CD4-positive, alpha-beta memory T cell (primary cell): ENCODE measurements at regions of chr9 and their contacts with region 1.

Region 1: DNA sequence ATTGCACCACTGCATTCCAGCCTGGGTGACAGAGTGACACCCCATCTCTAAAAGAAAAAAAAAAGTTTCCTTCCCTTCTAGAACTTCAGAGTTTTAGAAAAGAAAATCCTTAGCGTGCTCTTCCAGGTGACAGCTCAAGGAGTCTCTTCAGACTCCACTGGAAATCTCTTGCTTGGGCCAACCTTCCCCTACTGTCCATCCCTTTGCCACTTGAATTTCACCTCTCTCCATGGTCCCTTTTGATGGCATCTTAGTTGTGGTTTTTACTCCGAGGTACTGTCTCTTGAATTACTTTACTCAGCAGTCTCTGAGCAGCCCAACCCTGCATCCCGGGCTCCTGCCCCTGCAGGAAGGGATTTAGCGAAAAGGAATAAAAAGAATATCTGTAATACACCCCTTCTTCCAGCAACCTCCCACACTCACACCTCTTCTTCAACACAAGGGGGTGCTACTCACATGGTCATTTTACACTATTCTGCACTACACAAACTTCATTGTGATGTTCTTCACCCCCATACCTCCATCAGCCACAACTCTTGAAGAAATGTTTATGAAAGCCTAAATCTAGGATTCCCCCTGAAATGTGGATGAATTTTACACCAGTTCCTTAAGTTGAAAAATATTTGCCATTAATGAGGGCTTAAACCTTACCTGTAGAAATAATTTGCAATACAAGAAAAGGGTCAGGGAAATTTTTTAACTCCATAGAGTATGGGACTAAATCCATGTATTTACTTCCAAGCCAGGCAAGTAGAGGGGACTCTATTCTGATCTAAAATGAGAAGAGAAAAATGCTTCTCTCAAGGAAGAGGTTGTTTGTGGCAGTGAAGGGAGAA is 25.9 kb downstream of the TPD52L3 start:
- DNase-seq: peak in 4 of 5 donors; percentile 51 to 66 (median 59)
- H3K4me3 ChIP-seq: no peak overlapping the region
- H3K4me3 Mint-ChIP-seq: no peak overlapping the region
- H3K27ac ChIP-seq: no peak overlapping the region
- H3K27ac Mint-ChIP-seq: no peak overlapping the region
- H3K4me1 ChIP-seq: no peaks in the 10 kb centered on the region
- H3K4me1 Mint-ChIP-seq: no peaks in the 10 kb centered on the region
- H3K27me3 ChIP-seq: no peaks in the 10 kb centered on the region
- H3K27me3 Mint-ChIP-seq: peaks cover 1 to 5% of the 10 kb centered on the region in 2 donors

Region 2: GRCh38 chr9:5712651-5713390 is 641.2 kb before region 1 on chr9:
- CTCF ChIA-PET with region 1: no interaction called
- POLR2A ChIA-PET with region 1: no interaction called
- intact Hi-C with region 1: no loop called
- DNase-seq: no peak
- H3K4me3 ChIP-seq: no peak overlapping the region
- H3K4me3 Mint-ChIP-seq: no peak overlapping the region
- H3K27ac ChIP-seq: no peak overlapping the region
- H3K27ac Mint-ChIP-seq: peak overlapping the region in 1 of 7 donors; percentile 14
- H3K4me1 ChIP-seq: no peaks in the 10 kb centered on the region
- H3K4me1 Mint-ChIP-seq: peaks cover 0 to 3% (median 0%) of the 10 kb centered on the region in 4 donors
- H3K27me3 ChIP-seq: no peaks in the 10 kb centered on the region
- H3K27me3 Mint-ChIP-seq: no peaks in the 10 kb centered on the region

Region 3: GRCh38 chr9:6367128-6367890 is 13.2 kb after region 1 on chr9:
- CTCF ChIA-PET with region 1: interaction called, 15 read pairs
- POLR2A ChIA-PET with region 1: no interaction called
- intact Hi-C with region 1: no loop called
- DNase-seq: no peak
- H3K4me3 ChIP-seq: no peak overlapping the region
- H3K4me3 Mint-ChIP-seq: no peak overlapping the region
- H3K27ac ChIP-seq: no peak overlapping the region
- H3K27ac Mint-ChIP-seq: no peak overlapping the region
- H3K4me1 ChIP-seq: no peaks in the 10 kb centered on the region
- H3K4me1 Mint-ChIP-seq: no peaks in the 10 kb centered on the region
- H3K27me3 ChIP-seq: no peaks in the 10 kb centered on the region
- H3K27me3 Mint-ChIP-seq: peaks cover 0 to 3% of the 10 kb centered on the region in 2 donors

Region 4: GRCh38 chr9:6490863-6491262 is 136.8 kb after region 1 on chr9:
- CTCF ChIA-PET with region 1: interaction called, 6 read pairs
- POLR2A ChIA-PET with region 1: no interaction called
- intact Hi-C with region 1: loop called (anchors 5 kb)
- DNase-seq: no peak
- H3K4me3 ChIP-seq: no peak overlapping the region
- H3K4me3 Mint-ChIP-seq: no peak overlapping the region
- H3K27ac ChIP-seq: no peak overlapping the region
- H3K27ac Mint-ChIP-seq: no peak overlapping the region
- H3K4me1 ChIP-seq: no peaks in the 10 kb centered on the region
- H3K4me1 Mint-ChIP-seq: peaks cover 0 to 20% (median 11%) of the 10 kb centered on the region in 4 donors
- H3K27me3 ChIP-seq: no peaks in the 10 kb centered on the region
- H3K27me3 Mint-ChIP-seq: no peaks in the 10 kb centered on the region

Region 5: DNA sequence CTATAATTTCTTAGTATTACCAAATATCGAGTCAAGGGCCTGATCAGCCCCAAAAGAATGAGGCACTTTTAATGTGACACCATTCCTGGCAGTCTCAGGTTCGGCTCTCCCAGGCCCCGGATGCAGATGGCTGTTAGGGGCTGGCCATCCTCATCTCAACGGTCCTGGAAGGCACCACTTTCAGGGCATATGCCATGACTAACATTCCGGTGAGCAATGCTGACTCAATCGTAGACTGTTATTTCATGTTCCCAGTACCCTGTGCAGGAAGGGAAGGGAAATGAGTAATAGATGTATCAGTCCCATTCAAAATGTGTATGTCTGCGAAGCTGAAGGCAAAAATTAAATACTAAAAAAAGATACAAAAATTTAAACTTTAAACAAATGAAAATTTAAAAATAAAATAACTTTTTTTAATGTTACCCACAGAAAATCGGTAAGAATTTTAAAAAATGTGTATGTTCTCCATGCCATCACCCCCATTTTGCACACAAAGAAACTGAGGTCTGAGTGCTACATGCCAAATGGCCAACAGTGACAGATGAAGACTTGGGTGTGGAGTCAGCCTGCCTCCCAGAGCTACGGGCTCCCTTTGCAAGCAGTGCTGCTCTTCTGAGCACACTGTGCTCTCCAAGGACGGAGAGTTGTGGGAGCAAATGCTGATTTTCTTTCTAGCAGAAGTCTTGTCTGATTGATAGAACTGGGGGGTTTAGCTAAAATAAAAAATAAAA is 212.5 kb after region 1 on chr9:
- CTCF ChIA-PET with region 1: interaction called, 236 read pairs
- POLR2A ChIA-PET with region 1: interaction called, 4 read pairs
- intact Hi-C with region 1: no loop called
- DNase-seq: no peak
- H3K4me3 ChIP-seq: no peak overlapping the region
- H3K4me3 Mint-ChIP-seq: no peak overlapping the region
- H3K27ac ChIP-seq: no peak overlapping the region
- H3K27ac Mint-ChIP-seq: peak overlapping the region in 2 of 7 donors; percentile 2 to 42
- H3K4me1 ChIP-seq: no peaks in the 10 kb centered on the region
- H3K4me1 Mint-ChIP-seq: peaks cover 0 to 1% (median 0%) of the 10 kb centered on the region in 4 donors
- H3K27me3 ChIP-seq: no peaks in the 10 kb centered on the region
- H3K27me3 Mint-ChIP-seq: peaks cover 0 to 1% of the 10 kb centered on the region in 2 donors

Region 6: GRCh38 chr9:6575324-6576034 is 221.4 kb after region 1 on chr9:
- CTCF ChIA-PET with region 1: interaction called, 236 read pairs
- POLR2A ChIA-PET with region 1: no interaction called
- intact Hi-C with region 1: no loop called
- DNase-seq: no peak
- H3K4me3 ChIP-seq: no peak overlapping the region
- H3K4me3 Mint-ChIP-seq: no peak overlapping the region
- H3K27ac ChIP-seq: no peak overlapping the region
- H3K27ac Mint-ChIP-seq: no peak overlapping the region
- H3K4me1 ChIP-seq: no peaks in the 10 kb centered on the region
- H3K4me1 Mint-ChIP-seq: no peaks in the 10 kb centered on the region
- H3K27me3 ChIP-seq: no peaks in the 10 kb centered on the region
- H3K27me3 Mint-ChIP-seq: peaks cover 6 to 13% of the 10 kb centered on the region in 2 donors

Region 7: DNA sequence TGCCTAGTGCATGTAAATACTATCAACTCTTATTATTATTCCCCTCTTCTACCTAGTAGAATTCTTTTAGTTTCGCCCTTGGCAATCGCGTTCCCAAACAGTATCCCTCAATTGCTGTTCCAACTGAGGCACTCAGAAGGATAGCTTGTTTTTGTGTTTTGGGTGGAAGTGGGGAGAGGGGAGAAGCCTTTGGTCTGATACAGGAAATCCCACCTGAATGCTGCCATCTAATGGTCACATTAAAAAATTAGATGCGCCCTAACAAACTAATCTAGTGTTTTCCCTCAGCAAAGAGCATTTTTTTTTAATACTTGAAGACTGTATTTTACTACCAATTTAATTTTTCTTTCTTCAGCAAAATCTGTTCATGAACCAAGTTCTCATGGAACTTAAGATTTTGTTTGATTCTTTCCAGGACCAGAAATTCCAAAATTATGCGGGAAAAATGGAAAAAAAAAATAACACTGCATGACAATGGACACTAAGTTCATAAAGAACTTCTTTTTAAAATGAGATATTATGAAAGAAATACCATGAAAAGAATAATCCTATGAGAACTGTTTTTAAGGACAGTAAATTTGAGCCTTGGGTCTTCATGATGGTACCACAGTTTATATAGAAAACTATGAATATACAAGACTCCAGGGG is 313.7 kb after region 1 on chr9:
- CTCF ChIA-PET with region 1: interaction called, 3 read pairs
- POLR2A ChIA-PET with region 1: no interaction called
- intact Hi-C with region 1: loop called (anchors 1 kb)
- DNase-seq: peak in 1 of 5 donors; percentile 13
- H3K4me3 ChIP-seq: no peak overlapping the region
- H3K4me3 Mint-ChIP-seq: no peak overlapping the region
- H3K27ac ChIP-seq: no peak overlapping the region
- H3K27ac Mint-ChIP-seq: no peak overlapping the region
- H3K4me1 ChIP-seq: no peaks in the 10 kb centered on the region
- H3K4me1 Mint-ChIP-seq: peaks cover 0 to 2% (median under 1%) of the 10 kb centered on the region in 4 donors
- H3K27me3 ChIP-seq: no peaks in the 10 kb centered on the region
- H3K27me3 Mint-ChIP-seq: no peaks in the 10 kb centered on the region

Region 8: DNA sequence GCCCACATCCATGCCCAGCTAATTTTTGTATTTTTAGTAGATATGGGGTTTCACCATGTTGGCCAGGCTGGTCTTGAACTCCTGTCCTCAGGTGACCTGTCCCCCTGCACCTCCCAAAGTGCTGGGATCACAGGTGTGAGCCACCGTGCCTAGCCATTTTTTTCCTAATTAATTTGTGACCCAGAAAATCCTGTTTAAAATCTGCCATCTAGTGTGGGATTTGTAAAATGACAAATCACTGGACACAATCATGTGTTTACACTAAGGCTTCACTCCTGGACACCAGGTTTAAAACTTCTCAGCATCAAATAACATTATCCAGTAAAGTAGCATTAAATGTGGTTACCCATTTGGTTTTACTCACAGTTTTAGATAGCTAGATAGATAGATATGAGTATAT is 385.1 kb after region 1 on chr9:
- CTCF ChIA-PET with region 1: interaction called, 3 read pairs
- POLR2A ChIA-PET with region 1: no interaction called
- intact Hi-C with region 1: loop called (anchors 1 kb)
- DNase-seq: no peak
- H3K4me3 ChIP-seq: no peak overlapping the region
- H3K4me3 Mint-ChIP-seq: no peak overlapping the region
- H3K27ac ChIP-seq: no peak overlapping the region
- H3K27ac Mint-ChIP-seq: no peak overlapping the region
- H3K4me1 ChIP-seq: no peaks in the 10 kb centered on the region
- H3K4me1 Mint-ChIP-seq: no peaks in the 10 kb centered on the region
- H3K27me3 ChIP-seq: no peaks in the 10 kb centered on the region
- H3K27me3 Mint-ChIP-seq: peaks cover 2% of the 10 kb centered on the region in 2 donors